Calu3 (cell line): ENCODE measurements at regions of chr2 and their contacts with region 1.

Region 1: GRCh38 chr2:153478334-153479261 is at the start of gene RPRM:
- DNase-seq: peak; percentile 82
- H3K4me3 Mint-ChIP-seq: peak within 1 kb of the TSS; percentile 46
- H3K27ac Mint-ChIP-seq: peak within 1 kb of the TSS; percentile 3
- H3K4me1 Mint-ChIP-seq: peaks cover 8% of the 10 kb centered on the region
- H3K27me3 Mint-ChIP-seq: no peaks in the 10 kb centered on the region
- CTCF ChIP-seq: peak; percentile 93
- total RNA-seq, gene RPRM: 1.0 and 2.1 TPM in 2 replicates

Region 2: GRCh38 chr2:152815634-152816257 is 662.9 kb before region 1 on chr2:
- CTCF ChIA-PET with region 1: no interaction called
- intact Hi-C with region 1: no loop called
- DNase-seq: no peak
- H3K4me3 Mint-ChIP-seq: no peak overlapping the region
- H3K27ac Mint-ChIP-seq: no peak overlapping the region
- H3K4me1 Mint-ChIP-seq: peaks cover 9% of the 10 kb centered on the region
- H3K27me3 Mint-ChIP-seq: no peaks in the 10 kb centered on the region
- CTCF ChIP-seq: no peak

Region 3: DNA sequence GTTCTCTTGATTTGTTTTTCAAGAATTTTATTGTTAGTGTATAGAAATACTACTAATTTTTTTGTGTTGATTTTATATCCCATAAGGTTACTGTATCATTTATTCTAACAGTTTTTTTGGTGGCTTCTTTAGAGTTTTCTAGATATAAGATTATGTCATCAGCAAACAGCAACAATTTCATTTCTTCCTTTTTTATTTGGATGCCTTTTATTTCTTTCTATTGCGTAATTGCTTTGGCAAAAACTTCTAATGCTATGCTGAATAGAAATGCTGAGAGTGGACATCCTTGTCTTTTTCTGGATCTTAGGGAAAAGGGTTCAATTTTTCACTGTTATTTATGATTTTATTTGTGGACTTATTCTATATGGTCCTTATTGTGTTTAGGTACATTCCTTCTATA is 298.8 kb before region 1 on chr2:
- CTCF ChIA-PET with region 1: no interaction called
- intact Hi-C with region 1: loop called (anchors 5 kb)
- DNase-seq: no peak
- H3K4me3 Mint-ChIP-seq: no peak overlapping the region
- H3K27ac Mint-ChIP-seq: no peak overlapping the region
- H3K4me1 Mint-ChIP-seq: no peaks in the 10 kb centered on the region
- H3K27me3 Mint-ChIP-seq: no peaks in the 10 kb centered on the region
- CTCF ChIP-seq: no peak

Region 4: GRCh38 chr2:153222231-153223165 is 256.1 kb before region 1 on chr2:
- CTCF ChIA-PET with region 1: no interaction called
- intact Hi-C with region 1: no loop called
- DNase-seq: no peak
- H3K4me3 Mint-ChIP-seq: no peak overlapping the region
- H3K27ac Mint-ChIP-seq: no peak overlapping the region
- H3K4me1 Mint-ChIP-seq: no peaks in the 10 kb centered on the region
- H3K27me3 Mint-ChIP-seq: no peaks in the 10 kb centered on the region
- CTCF ChIP-seq: no peak